Prostate gland (tissue), 2 donors: ENCODE measurements at regions of chr12 and their contacts with region 1.

Region 1: GRCh38 chr12:65556681-65557437 is 267.4 kb upstream of the HMGA2 start:
- DNase-seq: peak; percentile 74
- H3K4me3 ChIP-seq: no peak overlapping the region
- H3K27ac ChIP-seq: no peak overlapping the region
- H3K4me1 ChIP-seq: no peaks in the 10 kb centered on the region
- H3K27me3 ChIP-seq: no peaks in the 10 kb centered on the region
- CTCF ChIP-seq: peak; percentile 67 to 90 (median 86)
- POLR2A ChIP-seq: no peak

Region 2: DNA sequence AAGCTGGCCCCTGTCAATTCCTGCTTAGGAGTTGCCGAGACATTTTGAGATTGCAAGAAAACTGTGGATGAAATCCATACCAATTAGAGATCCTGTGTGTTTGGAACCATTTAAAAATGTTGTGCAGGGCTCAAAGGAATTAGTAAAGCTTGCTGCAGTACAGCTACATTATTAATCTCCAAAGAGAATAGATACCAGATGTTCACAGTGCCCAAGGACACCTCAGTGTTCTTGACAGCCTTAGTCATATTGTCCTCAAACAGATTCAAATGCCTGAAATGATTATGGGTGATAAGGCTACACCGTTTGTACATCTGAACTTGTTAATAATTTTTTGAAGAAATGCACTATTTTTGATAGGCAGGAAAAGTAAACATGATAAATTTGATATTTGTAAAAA is 113.8 kb before region 1 on chr12:
- intact Hi-C with region 1: no loop called
- DNase-seq: no peak
- H3K4me3 ChIP-seq: no peak overlapping the region
- H3K27ac ChIP-seq: no peak overlapping the region
- H3K4me1 ChIP-seq: no peaks in the 10 kb centered on the region
- H3K27me3 ChIP-seq: no peaks in the 10 kb centered on the region
- CTCF ChIP-seq: no peak
- POLR2A ChIP-seq: no peak

Region 3: DNA sequence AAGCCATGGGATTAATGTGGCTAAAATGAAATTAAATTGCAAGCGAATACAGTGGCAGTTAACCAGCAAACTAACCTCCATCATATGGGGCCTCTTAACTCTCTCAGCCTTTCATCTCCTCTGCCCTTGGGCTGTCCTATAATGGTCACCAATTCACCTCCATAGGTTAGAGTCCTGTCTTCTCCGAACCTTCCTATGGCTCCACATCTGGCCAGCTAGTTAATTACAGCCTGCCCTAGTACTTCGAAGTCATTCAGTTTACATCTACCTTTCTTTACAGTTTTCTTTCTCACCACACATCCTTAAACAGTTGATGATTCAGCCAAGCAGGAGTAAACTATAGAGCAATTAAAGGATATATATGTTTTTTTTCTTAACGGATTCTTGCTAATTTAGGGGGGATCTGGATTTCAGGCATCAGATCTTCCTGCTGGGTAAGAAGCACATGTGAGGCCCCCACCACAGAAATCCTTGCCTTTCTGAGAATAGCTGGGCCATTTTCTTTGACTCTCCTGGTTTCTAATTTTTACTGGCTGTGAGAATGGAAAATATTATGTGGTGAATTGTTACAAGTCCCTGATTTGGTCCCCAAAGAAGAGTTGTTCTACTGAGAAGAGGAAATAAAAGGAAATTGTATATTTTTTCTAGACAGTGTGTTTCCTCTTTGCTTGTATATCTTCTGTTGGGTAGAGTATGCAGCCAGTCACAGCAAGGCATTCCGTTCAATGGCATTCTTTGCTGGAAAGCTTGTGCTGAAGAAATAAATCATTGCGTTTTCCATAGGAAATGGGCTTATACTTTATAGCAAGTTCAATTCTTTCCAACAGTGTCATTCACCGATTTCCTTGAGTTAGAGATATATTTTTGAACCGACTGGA is 284.2 kb after region 1 on chr12:
- intact Hi-C with region 1: no loop called
- DNase-seq: no peak
- H3K4me3 ChIP-seq: no peak overlapping the region
- H3K27ac ChIP-seq: no peak overlapping the region
- H3K4me1 ChIP-seq: no peaks in the 10 kb centered on the region
- H3K27me3 ChIP-seq: no peaks in the 10 kb centered on the region
- CTCF ChIP-seq: no peak
- POLR2A ChIP-seq: no peak

Region 4: DNA sequence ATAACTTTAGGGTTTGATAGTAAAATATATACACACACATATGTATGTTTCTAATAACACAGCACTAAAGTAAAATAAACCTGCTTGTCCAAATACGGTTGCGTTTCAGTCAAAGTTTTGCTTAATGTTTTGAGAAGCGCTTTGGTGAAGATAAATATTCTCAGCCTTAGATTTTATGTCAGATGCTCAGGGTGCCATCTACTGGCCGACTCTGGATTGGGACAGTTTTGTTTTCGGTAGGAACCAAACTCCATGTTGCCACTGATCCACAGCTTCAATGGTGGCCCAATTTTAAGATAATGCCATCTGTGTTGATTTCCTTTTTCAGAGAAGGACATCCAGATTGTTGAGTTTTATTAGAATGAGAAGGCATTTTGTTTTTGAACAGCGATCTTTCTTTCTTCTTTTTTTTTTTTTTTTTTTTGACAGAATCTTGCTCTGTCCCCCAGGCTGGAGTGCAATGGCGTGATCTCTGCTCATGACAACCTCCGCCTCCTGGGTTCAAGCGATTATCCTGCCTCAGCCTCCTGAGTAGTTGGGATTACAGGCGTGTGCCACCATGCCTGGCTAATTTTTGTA is 530.6 kb after region 1 on chr12:
- intact Hi-C with region 1: loop called (anchors 5 kb)
- DNase-seq: peak; percentile 54
- H3K4me3 ChIP-seq: no peak overlapping the region
- H3K27ac ChIP-seq: no peak overlapping the region
- H3K4me1 ChIP-seq: no peaks in the 10 kb centered on the region
- H3K27me3 ChIP-seq: no peaks in the 10 kb centered on the region
- CTCF ChIP-seq: peak in 3 of 4 experiments; percentile 47 to 62 (median 60)
- POLR2A ChIP-seq: no peak

Region 5: DNA sequence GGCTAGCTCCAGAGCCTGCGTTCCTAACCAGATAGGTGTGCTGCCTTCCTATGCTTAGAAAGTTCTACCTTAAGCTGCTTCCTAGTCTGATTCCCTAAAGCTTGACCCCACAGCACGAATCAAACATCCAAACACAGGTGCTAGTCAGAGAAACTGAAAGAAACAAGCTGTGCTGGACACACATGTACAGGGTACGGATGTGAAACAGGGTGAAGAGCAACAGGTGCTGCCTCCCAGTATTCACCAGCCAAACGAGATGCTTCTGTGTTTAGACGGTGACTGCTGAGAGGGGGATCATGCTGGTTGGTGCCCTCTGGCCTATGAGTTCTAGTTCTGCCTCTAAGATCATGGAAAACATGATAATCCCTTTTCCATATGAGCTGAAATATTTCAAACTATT is 1016.7 kb after region 1 on chr12:
- intact Hi-C with region 1: no loop called
- DNase-seq: no peak
- H3K4me3 ChIP-seq: no peak overlapping the region
- H3K27ac ChIP-seq: no peak overlapping the region
- H3K4me1 ChIP-seq: no peaks in the 10 kb centered on the region
- H3K27me3 ChIP-seq: no peaks in the 10 kb centered on the region
- CTCF ChIP-seq: no peak
- POLR2A ChIP-seq: no peak